HCT116 (cell line): ENCODE measurements at regions of chr3 and their contacts with region 1.

Region 1: GRCh38 chr3:133661454-133662277 is at the start of gene TOPBP1:
- DNase-seq: peak; percentile 48
- ATAC-seq: peak; percentile 84
- H3K4me3 ChIP-seq: peak within 1 kb of the TSS; percentile 80 to 92
- H3K27ac ChIP-seq: peak within 1 kb of the TSS; percentile 70
- H3K4me1 ChIP-seq: peaks cover 0 to 21% of the 10 kb centered on the region in 2 experiments; a peak in 3 of 4 replicates
- H3K27me3 ChIP-seq: no peaks in the 10 kb centered on the region
- CTCF ChIP-seq: no peak
- POLR2A ChIP-seq: peak; percentile 35
- RAD21 ChIP-seq: no peak
- total RNA-seq, gene TOPBP1: 42.2 TPM

Region 2: GRCh38 chr3:133464573-133464972 is 197.1 kb before region 1 on chr3:
- CTCF ChIA-PET with region 1: interaction called, 4 read pairs
- POLR2A ChIA-PET with region 1: no interaction called
- RAD21 ChIA-PET with region 1: no interaction called
- intact Hi-C with region 1: loop called (anchors 10 kb)
- DNase-seq: no peak
- ATAC-seq: peak; percentile 85
- H3K4me3 ChIP-seq: no peak overlapping the region
- H3K27ac ChIP-seq: no peak overlapping the region
- H3K4me1 ChIP-seq: no peaks in the 10 kb centered on the region
- H3K27me3 ChIP-seq: no peaks in the 10 kb centered on the region
- CTCF ChIP-seq: peak; percentile 34 to 48 (median 42); a peak in 4 of 6 replicates
- POLR2A ChIP-seq: no peak
- RAD21 ChIP-seq: peak; percentile 58

Region 3: GRCh38 chr3:133805527-133806475 is 144.1 kb after region 1 on chr3 and contains the start of gene SRPRB:
- CTCF ChIA-PET with region 1: no interaction called
- POLR2A ChIA-PET with region 1: no interaction called
- RAD21 ChIA-PET with region 1: no interaction called
- intact Hi-C with region 1: loop called (anchors 5 kb)
- DNase-seq: peak; percentile 88
- ATAC-seq: peak; percentile 98
- H3K4me3 ChIP-seq: peak within 1 kb of the TSS; percentile 87 to 89
- H3K27ac ChIP-seq: peak within 1 kb of the TSS; percentile 20
- H3K4me1 ChIP-seq: peaks cover 3 to 11% of the 10 kb centered on the region in 2 experiments
- H3K27me3 ChIP-seq: no peaks in the 10 kb centered on the region
- CTCF ChIP-seq: no peak
- POLR2A ChIP-seq: peak; percentile 63
- RAD21 ChIP-seq: no peak
- total RNA-seq, gene SRPRB: 61.0 TPM

Region 4: GRCh38 chr3:133821767-133822638 is 160.3 kb after region 1 on chr3:
- CTCF ChIA-PET with region 1: no interaction called
- POLR2A ChIA-PET with region 1: no interaction called
- RAD21 ChIA-PET with region 1: no interaction called
- intact Hi-C with region 1: loop called (anchors 5 kb)
- DNase-seq: peak; percentile 55
- ATAC-seq: peak; percentile 82
- H3K4me3 ChIP-seq: no peak overlapping the region
- H3K27ac ChIP-seq: no peak overlapping the region
- H3K4me1 ChIP-seq: no peaks in the 10 kb centered on the region; a peak in 1 of 4 replicates
- H3K27me3 ChIP-seq: no peaks in the 10 kb centered on the region
- CTCF ChIP-seq: peak; percentile 29 to 51 (median 43); a peak in 4 of 6 replicates
- POLR2A ChIP-seq: no peak
- RAD21 ChIP-seq: peak; percentile 55

Region 5: DNA sequence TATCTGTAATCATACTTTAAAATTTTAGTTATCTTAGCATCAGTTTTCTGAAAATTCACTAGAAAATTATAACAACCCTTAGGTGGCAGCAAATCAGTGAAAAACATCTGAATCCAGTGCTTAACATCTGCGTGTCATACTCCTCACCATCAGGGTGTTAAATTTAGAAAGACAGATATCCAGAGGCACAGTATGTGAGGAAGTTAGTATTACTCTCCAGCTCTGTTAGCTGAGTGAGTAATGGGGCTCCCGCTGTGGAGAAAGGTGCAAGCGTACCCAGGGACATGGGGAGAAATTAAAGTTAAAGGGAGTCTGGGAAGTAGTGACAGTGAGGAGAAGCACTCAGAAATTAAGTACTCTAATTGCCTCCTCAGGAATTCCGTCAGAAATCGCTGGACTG is 875.1 kb after region 1 on chr3:
- CTCF ChIA-PET with region 1: no interaction called
- POLR2A ChIA-PET with region 1: no interaction called
- RAD21 ChIA-PET with region 1: no interaction called
- intact Hi-C with region 1: no loop called
- DNase-seq: no peak
- ATAC-seq: no peak
- H3K4me3 ChIP-seq: no peak overlapping the region
- H3K27ac ChIP-seq: no peak overlapping the region
- H3K4me1 ChIP-seq: no peaks in the 10 kb centered on the region
- H3K27me3 ChIP-seq: no peaks in the 10 kb centered on the region
- CTCF ChIP-seq: no peak
- POLR2A ChIP-seq: no peak
- RAD21 ChIP-seq: no peak